Dendritic cell treated with granulocyte-macrophage colony-stimulating factor and Interleukin-4, amounts not matched to agents 40 ng/mL and 50 ng/mL, for 4 days (primary cell): ENCODE measurements at regions of chr6 and their contacts with region 1.

Region 1: DNA sequence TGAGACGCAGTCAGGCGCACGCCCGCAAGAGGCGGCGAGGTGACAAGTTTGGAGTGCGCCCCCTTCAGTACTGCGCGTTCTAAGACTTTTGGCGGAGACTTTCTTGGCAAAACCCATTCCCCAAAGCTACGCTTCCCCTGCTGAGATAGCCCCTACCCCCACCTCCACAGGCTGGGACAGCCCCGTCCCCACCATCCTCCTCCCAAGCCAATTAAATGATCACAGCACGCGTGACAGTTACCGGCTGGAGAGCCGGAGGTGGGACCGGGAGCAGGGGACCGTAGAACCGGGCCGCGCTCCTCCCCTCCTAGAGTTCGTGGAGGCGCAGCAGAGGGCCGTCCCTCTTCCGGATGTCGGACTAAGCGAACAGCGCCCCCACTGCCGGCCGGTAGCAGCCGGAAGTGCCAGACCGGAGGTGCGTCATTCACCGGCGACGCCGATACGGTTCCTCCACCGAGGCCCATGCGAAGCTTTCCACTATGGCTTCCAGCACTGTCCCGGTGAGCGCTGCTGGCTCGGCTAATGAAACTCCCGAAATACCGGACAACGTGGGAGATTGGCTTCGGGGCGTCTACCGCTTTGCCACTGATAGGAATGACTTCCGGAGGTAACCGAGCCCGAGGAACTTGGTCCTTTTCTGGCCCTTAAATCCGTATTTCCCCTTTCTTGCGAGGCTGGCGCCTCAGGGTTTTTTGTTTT is at the start of gene TOMM6:
- H3K4me3 Mint-ChIP-seq: peak within 1 kb of the TSS; percentile 90
- H3K27ac Mint-ChIP-seq: peak within 1 kb of the TSS; percentile 96
- H3K4me1 Mint-ChIP-seq: peaks cover 46% of the 10 kb centered on the region
- H3K27me3 Mint-ChIP-seq: no peaks in the 10 kb centered on the region

Region 2: DNA sequence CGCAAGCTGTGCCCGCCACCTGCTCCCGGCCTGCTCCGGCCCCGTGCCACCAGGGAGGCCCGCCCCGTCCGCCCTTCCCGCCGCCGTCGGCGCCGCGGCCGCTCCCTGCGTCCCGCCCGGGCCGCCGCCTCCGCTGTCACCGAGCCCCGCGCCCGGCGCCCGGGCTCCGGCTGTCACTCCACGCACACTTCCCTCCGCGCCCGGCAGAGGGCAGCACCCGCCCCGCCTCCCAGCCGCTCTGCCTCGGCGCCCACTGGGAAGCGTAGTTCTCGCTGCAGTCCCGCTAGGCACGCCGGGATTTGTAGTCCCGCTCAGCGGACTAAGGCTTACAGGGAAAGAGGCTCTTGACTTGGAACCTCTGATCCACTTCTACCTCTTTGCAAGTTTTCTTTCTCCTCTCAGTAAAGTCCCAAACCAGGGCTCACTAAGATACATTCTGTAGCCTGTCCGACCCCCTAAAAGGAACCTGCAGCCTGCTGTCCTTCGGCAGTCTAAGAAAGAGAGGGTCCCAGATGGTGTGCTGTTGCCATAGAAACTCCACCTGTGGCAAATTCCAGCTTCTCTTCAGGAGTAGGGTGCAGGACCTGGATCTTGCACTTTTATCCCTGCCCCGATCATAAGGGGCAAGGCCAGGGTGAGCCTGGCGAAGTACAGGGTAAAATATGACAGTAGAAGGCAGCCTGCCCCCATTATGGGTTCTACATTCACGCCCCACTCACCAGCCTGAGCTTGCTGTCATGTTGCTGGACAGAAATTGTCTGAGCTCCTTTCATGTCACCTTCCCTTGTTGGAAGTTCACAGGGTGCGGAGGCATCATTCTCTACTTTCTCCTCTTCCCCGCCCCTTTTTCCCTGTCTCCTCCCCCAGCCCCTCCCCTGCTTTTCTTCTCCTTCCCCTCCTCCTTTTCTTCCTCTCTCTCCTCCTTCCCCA is 51.7 kb before region 1 on chr6 and contains the start of gene TFEB:
- intact Hi-C with region 1: loop called (anchors 2 kb)
- H3K4me3 Mint-ChIP-seq: peak within 1 kb of the TSS; percentile 83
- H3K27ac Mint-ChIP-seq: peak within 1 kb of the TSS; percentile 85
- H3K4me1 Mint-ChIP-seq: peaks cover 42% of the 10 kb centered on the region
- H3K27me3 Mint-ChIP-seq: no peaks in the 10 kb centered on the region

Region 3: GRCh38 chr6:41846666-41847237 is 59.4 kb after region 1 on chr6:
- intact Hi-C with region 1: loop called (anchors 10 kb)
- H3K4me3 Mint-ChIP-seq: no peak overlapping the region
- H3K27ac Mint-ChIP-seq: no peak overlapping the region
- H3K4me1 Mint-ChIP-seq: no peaks in the 10 kb centered on the region
- H3K27me3 Mint-ChIP-seq: no peaks in the 10 kb centered on the region

Region 4: GRCh38 chr6:41895300-41896233 is 108.2 kb after region 1 on chr6 and contains the start of gene USP49:
- intact Hi-C with region 1: loop called (anchors 5 kb)
- H3K4me3 Mint-ChIP-seq: no peak within 1 kb of the TSS
- H3K27ac Mint-ChIP-seq: no peak within 1 kb of the TSS
- H3K4me1 Mint-ChIP-seq: peaks cover 12% of the 10 kb centered on the region
- H3K27me3 Mint-ChIP-seq: no peaks in the 10 kb centered on the region

Region 5: DNA sequence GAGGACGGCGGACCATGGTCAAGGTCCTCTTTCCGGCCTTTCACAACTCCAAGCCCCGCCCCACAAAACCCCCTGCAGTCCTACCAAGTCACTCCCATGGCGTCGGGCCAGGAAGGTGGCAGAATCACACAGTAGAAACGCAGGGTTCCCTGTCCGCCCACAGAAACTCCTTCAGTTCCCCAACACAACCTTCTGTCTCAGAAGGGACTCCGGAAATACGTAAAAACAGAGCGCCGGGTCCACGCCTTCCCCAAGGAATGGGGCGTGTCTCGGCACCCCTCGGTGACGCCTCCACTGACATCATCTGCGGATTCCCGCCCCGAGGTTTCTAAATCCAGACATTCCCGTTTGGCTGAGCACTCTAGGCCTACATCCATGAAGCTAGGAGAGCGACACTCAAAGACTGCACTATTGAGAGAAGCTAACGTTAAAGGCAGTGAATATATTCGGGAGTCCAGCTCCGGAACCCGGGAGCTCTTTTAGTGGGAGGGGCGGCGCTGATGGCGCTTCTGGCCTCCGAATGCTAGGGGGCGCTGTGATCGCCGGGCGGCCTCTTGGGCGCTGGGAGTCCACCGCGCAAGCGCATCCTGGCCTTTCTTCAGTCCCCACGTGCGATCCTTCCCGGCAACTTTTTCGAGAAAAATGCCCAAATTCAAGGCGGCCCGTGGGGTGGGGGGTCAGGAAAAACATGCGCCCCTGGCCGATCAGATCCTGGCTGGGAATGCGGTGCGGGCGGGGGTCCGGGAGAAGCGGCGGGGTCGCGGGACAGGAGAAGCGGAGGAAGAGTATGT is 133.7 kb after region 1 on chr6 and contains the starts of genes BYSL and MED20:
- intact Hi-C with region 1: loop called (anchors 1 kb)
- H3K4me3 Mint-ChIP-seq: peak within 1 kb of the TSS; percentile 99
- H3K27ac Mint-ChIP-seq: peak within 1 kb of the TSS; percentile 99
- H3K4me1 Mint-ChIP-seq: peaks cover 60% of the 10 kb centered on the region
- H3K27me3 Mint-ChIP-seq: no peaks in the 10 kb centered on the region

Region 6: GRCh38 chr6:42563697-42564505 is 776.5 kb after region 1 on chr6 and contains the start of gene UBR2:
- intact Hi-C with region 1: loop called (anchors 5 kb)
- H3K4me3 Mint-ChIP-seq: peak within 1 kb of the TSS; percentile 83
- H3K27ac Mint-ChIP-seq: peak within 1 kb of the TSS; percentile 96
- H3K4me1 Mint-ChIP-seq: peaks cover 27% of the 10 kb centered on the region
- H3K27me3 Mint-ChIP-seq: no peaks in the 10 kb centered on the region

Region 7: DNA sequence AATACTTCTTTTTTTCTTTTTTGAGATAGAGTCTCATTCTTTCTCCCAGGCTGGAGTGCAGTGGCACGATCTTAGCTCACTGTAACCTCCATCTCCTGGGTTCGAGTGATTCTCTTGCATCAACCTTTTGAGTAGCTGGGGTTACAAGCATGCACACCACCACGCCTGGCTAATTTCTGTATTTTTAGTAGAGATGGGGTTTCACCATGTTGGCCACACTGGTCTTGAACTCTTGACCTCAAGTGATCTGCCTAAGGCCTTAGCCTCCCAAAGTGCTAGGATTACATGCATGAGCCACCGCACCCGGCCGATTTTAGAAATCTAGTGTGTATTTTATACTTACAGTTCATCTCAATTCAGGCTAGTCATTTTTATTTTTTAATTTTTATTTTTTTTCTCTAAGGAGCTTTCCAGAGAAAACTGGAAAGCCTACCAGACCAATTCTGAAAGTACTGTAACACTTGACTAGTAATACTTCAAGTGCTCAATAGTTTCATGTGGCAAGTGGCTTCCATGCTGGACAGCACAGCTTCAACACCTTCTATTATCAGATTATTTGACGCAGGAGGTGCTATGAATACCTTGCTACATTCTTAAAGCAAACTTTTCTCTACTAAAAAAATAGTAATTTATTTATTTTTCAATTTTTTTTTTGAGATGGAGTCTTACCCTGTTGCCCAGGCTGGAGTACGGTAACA is 1754.6 kb after region 1 on chr6:
- intact Hi-C with region 1: no loop called
- H3K4me3 Mint-ChIP-seq: no peak overlapping the region
- H3K27ac Mint-ChIP-seq: no peak overlapping the region
- H3K4me1 Mint-ChIP-seq: no peaks in the 10 kb centered on the region
- H3K27me3 Mint-ChIP-seq: no peaks in the 10 kb centered on the region